ENCODE measurements at regions of chr10 and their contacts with region 1.

Region 1: GRCh38 chr10:24762966-24763623 is 39.4 kb upstream of the ARHGAP21 start:
- DNase-seq: no peak
- H3K4me3 ChIP-seq: no peak overlapping the region
- H3K27ac ChIP-seq: peak overlapping the region; percentile 31
- H3K27me3 ChIP-seq: no peaks in the 10 kb centered on the region
- CTCF ChIP-seq: no peak

Region 2: GRCh38 chr10:24889639-24890038 is 126.5 kb after region 1 on chr10:
- CTCF ChIA-PET with region 1: no interaction called
- POLR2A ChIA-PET with region 1: interaction called, 10 read pairs
- DNase-seq: no peak
- H3K4me3 ChIP-seq: no peak overlapping the region
- H3K27ac ChIP-seq: no peak overlapping the region
- H3K27me3 ChIP-seq: no peaks in the 10 kb centered on the region
- CTCF ChIP-seq: no peak